GM12878 (cell line): ENCODE measurements at regions of chr2 and their contacts with region 1.

Region 1: GRCh38 chr2:54613794-54614257 is 109.6 kb upstream of the EML6 start:
- DNase-seq: no peak
- ATAC-seq: peak; percentile 57
- H3K4me3 ChIP-seq: no peak overlapping the region
- H3K27ac ChIP-seq: no peak overlapping the region
- H3K4me1 ChIP-seq: peaks cover 2% of the 10 kb centered on the region; the same call in 1 of the 2 replicates
- H3K27me3 ChIP-seq: no peaks in the 10 kb centered on the region
- CTCF ChIP-seq: no peak
- EP300 ChIP-seq: no peak
- POLR2A ChIP-seq: no peak
- RAD21 ChIP-seq: no peak

Region 2: GRCh38 chr2:54624591-54625071 is 10.8 kb after region 1 on chr2:
- CTCF ChIA-PET with region 1: interaction called, 8 read pairs
- POLR2A ChIA-PET with region 1: interaction called, 5 read pairs
- RAD21 ChIA-PET with region 1: no interaction called
- SMC1A ChIA-PET with region 1: interaction called, 12 read pairs
- in situ Hi-C with region 1: no loop called
- intact Hi-C with region 1: no loop called
- DNase-seq: no peak
- ATAC-seq: no peak
- H3K4me3 ChIP-seq: no peak overlapping the region
- H3K27ac ChIP-seq: no peak overlapping the region
- H3K4me1 ChIP-seq: no peaks in the 10 kb centered on the region
- H3K27me3 ChIP-seq: no peaks in the 10 kb centered on the region
- CTCF ChIP-seq: no peak
- EP300 ChIP-seq: no peak
- POLR2A ChIP-seq: no peak
- RAD21 ChIP-seq: no peak

Region 3: GRCh38 chr2:54716375-54716774 is 102.5 kb after region 1 on chr2:
- CTCF ChIA-PET with region 1: no interaction called
- POLR2A ChIA-PET with region 1: no interaction called
- RAD21 ChIA-PET with region 1: no interaction called
- SMC1A ChIA-PET with region 1: no interaction called
- in situ Hi-C with region 1: no loop called
- intact Hi-C with region 1: no loop called
- DNase-seq: no peak
- ATAC-seq: peak; percentile 27; the same call in 1 of the 3 replicates
- H3K4me3 ChIP-seq: no peak overlapping the region
- H3K27ac ChIP-seq: no peak overlapping the region
- H3K4me1 ChIP-seq: no peaks in the 10 kb centered on the region
- H3K27me3 ChIP-seq: peaks cover 0 to 4% of the 10 kb centered on the region in 2 experiments; a peak in 3 of 4 replicates
- CTCF ChIP-seq: no peak
- EP300 ChIP-seq: no peak
- POLR2A ChIP-seq: no peak
- RAD21 ChIP-seq: no peak